H1 (cell line): ENCODE measurements at regions of chr11 and their contacts with region 1.

Region 1: GRCh38 chr11:63738720-63739360 is 29.7 kb downstream of the ZFTA start:
- DNase-seq: peak in 1 of 2 experiments; percentile 84
- H3K4me3 ChIP-seq: no peak overlapping the region
- H3K27ac ChIP-seq: no peak overlapping the region
- H3K4me1 ChIP-seq: no peaks in the 10 kb centered on the region
- H3K27me3 ChIP-seq: no peaks in the 10 kb centered on the region
- CTCF ChIP-seq: peak in 2 of 3 experiments; percentile 58 to 68; a peak in 3 of 4 replicates
- EP300 ChIP-seq: no peak
- POLR2A ChIP-seq: no peak
- RAD21 ChIP-seq: peak; percentile 56 to 69

Region 2: DNA sequence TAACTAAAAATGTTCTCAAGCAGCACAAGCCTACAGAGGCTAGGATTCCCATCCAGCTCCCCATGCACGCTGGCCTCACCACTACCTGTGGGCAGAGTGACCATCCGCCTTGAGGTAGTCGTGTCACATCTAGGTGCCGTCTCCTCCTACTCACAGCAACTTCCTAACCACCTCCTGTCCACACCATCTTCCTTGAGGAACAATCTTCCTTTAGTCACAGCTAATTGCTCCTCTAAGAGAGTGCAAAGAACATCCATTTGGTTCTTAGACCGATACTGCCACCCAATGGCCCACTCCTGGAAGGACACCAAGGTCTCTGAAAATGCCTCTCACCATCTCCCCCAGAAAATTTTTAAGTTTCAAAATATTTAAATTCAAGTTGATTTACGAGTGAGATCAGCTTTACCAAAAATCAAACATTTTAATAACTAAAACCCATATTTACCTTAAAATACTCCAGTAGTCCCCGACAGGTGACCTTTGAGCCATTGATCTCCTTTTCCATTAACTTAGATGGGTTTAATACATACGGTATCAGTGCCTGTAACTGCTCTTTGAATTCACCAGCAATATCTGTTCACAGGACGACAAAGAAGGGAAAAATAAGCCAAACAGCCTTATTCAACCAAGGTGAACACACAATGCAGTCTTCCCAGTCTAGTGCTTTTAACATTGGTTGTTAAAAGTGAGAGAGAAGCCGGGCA is 102.9 kb before region 1 on chr11:
- CTCF ChIA-PET with region 1: interaction called, 20 read pairs
- POLR2A ChIA-PET with region 1: no interaction called
- DNase-seq: peak; percentile 17 to 85
- H3K4me3 ChIP-seq: no peak overlapping the region
- H3K27ac ChIP-seq: peak overlapping the region; percentile 11; the same call in 1 of the 2 replicates
- H3K4me1 ChIP-seq: peaks cover 0 to 2% (median 0%) of the 10 kb centered on the region in 4 experiments; a peak in 1 of 7 replicates
- H3K27me3 ChIP-seq: no peaks in the 10 kb centered on the region
- CTCF ChIP-seq: peak; percentile 42 to 84 (median 83)
- EP300 ChIP-seq: no peak
- POLR2A ChIP-seq: no peak
- RAD21 ChIP-seq: peak; percentile 99

Region 3: DNA sequence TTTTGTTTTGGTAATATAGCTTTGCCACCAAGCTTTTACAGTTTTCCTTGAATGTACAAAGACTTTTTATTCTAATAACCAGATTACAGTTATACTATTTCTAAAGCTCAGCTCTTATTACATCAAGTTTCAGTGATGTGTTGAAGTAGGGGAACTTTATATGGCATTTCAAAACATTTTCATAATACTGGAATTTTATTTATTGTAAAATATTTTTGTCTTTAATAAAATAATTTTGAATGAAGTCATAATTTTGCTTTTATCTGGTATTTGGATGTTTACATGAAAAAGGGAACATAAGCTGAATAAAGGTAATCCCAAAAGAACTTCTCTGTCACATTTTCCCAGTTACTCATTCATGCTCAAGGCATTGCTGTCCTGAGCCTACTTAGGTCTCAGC is 22.8 kb before region 1 on chr11:
- CTCF ChIA-PET with region 1: interaction called, 24 read pairs
- POLR2A ChIA-PET with region 1: interaction called, 3 read pairs
- DNase-seq: no peak
- H3K4me3 ChIP-seq: no peak overlapping the region
- H3K27ac ChIP-seq: no peak overlapping the region
- H3K4me1 ChIP-seq: no peaks in the 10 kb centered on the region
- H3K27me3 ChIP-seq: no peaks in the 10 kb centered on the region
- CTCF ChIP-seq: no peak
- EP300 ChIP-seq: no peak
- POLR2A ChIP-seq: no peak
- RAD21 ChIP-seq: no peak

Region 4: DNA sequence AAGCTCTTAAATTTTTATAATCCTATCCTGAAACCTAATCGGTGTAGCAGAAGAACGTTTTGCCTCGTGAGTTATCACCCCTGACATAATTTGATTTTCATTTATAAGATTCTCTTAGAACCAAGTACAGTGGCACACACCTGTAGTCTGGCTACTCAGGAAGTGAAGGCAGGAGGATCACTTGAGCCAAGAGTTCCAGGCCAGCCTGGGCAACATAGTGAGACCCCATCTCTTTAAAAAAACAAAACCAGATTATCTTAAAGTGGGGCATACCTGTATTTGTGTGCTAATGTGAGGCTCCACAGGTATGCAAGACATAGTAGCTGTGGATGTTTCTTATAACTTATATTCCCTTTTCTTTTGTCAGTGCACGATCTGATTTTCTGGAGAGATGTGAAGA is 10.8 kb after region 1 on chr11:
- CTCF ChIA-PET with region 1: interaction called, 10 read pairs
- POLR2A ChIA-PET with region 1: interaction called, 6 read pairs
- DNase-seq: no peak
- H3K4me3 ChIP-seq: no peak overlapping the region
- H3K27ac ChIP-seq: no peak overlapping the region
- H3K4me1 ChIP-seq: peaks cover 0 to 3% (median 1%) of the 10 kb centered on the region in 4 experiments; a peak in 2 of 7 replicates
- H3K27me3 ChIP-seq: no peaks in the 10 kb centered on the region
- CTCF ChIP-seq: no peak
- EP300 ChIP-seq: no peak
- POLR2A ChIP-seq: no peak
- RAD21 ChIP-seq: no peak